ENCODE measurements at regions of chr1 and their contacts with region 1.

Region 1: DNA sequence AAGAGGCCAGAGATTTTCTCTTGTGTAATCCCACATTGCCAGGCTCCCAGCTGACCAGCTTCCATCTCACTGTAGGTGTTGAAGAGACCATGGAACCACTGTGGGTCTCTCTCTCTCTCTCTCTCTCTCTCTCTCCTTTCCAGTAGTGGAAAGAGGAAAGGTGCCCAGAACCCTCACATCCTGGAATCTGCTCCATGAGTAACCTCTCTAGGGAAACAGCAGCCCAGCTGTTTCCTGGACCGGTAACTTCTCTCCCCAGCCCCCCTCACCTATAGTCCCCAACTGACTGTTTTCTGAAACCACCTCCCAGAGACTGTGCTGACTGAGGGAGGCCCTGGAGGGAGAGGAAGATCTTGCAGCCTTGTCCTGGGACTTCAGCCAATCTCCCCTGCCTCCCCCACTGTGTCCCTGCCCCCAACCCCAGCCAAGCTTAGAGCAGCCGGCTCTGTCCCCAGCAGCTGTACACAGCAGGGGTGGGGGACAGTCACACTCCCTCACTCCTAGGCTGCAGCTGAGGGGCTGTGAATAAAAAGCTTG is 20.6 kb upstream of the SLC45A3 start:
- DNase-seq: no peak
- ATAC-seq: no peak
- H3K4me3 ChIP-seq: no peak overlapping the region
- H3K27ac ChIP-seq: no peak overlapping the region
- H3K4me1 ChIP-seq: no peaks in the 10 kb centered on the region
- H3K27me3 ChIP-seq: no peaks in the 10 kb centered on the region
- CTCF ChIP-seq: no peak
- POLR2A ChIP-seq: no peak

Region 2: DNA sequence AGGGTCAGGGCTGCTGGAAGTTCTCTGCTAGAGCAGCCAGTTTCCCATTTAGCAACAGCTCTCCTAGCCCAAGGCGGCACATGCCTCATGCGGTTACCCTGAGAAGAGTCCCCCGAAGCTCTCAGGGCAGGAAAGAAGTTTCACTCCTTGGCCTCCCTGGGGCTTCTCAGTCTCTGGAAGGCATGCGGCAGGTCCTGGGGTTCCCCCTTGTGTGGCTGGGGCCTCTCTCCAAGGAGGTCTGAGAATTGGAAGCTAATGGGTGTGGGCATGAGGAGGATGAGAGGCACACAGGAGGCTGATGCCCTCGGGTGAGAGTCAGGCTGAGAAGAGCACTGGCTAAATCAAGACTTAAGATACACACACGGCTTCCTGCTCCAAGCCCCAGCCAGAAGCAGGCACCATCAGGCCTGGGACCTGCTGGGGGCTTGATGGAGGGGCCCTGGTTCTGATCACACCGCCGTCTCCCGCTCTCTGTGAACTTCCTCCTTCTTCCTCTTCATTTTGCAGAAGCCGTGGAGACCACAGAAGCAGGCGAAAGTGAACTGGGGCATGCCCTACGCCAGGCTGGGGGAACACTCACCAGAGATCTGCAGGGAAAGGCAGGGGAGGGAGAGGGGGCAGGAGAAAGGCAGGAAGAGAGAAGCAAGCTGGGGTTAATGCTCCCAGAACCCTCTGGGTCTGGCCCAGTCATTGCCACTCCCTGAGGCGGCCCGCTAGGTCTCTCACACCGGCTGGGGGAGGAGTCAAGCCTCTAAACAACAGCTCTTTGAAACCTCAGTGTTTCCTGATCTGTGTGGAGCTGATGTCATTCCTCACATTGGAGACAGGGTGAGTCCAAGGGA is 260.2 kb before region 1 on chr1:
- intact Hi-C with region 1: no loop called
- DNase-seq: peak; percentile 65 to 86 (median 80)
- ATAC-seq: peak; percentile 90
- H3K4me3 ChIP-seq: no peak overlapping the region
- H3K27ac ChIP-seq: peak overlapping the region; percentile 61 to 85 (median 82)
- H3K4me1 ChIP-seq: peaks cover 47% of the 10 kb centered on the region
- H3K27me3 ChIP-seq: no peaks in the 10 kb centered on the region
- CTCF ChIP-seq: peak in 2 of 7 experiments; percentile 4 to 12
- POLR2A ChIP-seq: peak in 2 of 3 donors; percentile 39 to 51

Region 3: GRCh38 chr1:205485338-205486228 is 215.3 kb before region 1 on chr1:
- intact Hi-C with region 1: no loop called
- DNase-seq: peak; percentile 76 to 79 (median 76)
- ATAC-seq: peak; percentile 81
- H3K4me3 ChIP-seq: no peak overlapping the region
- H3K27ac ChIP-seq: no peak overlapping the region
- H3K4me1 ChIP-seq: peaks cover 7% of the 10 kb centered on the region
- H3K27me3 ChIP-seq: no peaks in the 10 kb centered on the region
- CTCF ChIP-seq: peak; percentile 89 to 98 (median 92)
- POLR2A ChIP-seq: no peak

Region 4: DNA sequence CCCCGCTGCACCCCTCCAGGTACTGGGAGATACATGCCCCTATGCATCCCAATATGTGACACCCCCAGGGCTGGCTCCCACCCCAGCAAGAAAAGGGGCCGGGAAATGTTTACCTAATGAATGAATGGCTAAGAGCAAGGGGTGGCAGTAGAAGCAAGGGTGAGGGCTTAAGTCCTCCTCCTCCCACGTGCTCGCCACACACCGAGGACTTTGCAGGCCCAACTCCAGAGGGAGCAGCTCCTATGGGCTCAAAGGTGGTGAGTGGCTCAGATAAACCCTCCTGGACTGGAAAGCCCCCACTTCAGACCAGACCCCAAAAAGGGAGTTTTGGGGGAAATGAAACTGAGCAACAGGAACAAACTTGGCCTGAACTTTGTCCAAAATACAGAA is 32.0 kb before region 1 on chr1:
- intact Hi-C with region 1: loop called (anchors 5 kb)
- DNase-seq: no peak
- ATAC-seq: no peak
- H3K4me3 ChIP-seq: no peak overlapping the region
- H3K27ac ChIP-seq: no peak overlapping the region
- H3K4me1 ChIP-seq: peaks cover 18% of the 10 kb centered on the region
- H3K27me3 ChIP-seq: no peaks in the 10 kb centered on the region
- CTCF ChIP-seq: no peak
- POLR2A ChIP-seq: no peak

Region 5: DNA sequence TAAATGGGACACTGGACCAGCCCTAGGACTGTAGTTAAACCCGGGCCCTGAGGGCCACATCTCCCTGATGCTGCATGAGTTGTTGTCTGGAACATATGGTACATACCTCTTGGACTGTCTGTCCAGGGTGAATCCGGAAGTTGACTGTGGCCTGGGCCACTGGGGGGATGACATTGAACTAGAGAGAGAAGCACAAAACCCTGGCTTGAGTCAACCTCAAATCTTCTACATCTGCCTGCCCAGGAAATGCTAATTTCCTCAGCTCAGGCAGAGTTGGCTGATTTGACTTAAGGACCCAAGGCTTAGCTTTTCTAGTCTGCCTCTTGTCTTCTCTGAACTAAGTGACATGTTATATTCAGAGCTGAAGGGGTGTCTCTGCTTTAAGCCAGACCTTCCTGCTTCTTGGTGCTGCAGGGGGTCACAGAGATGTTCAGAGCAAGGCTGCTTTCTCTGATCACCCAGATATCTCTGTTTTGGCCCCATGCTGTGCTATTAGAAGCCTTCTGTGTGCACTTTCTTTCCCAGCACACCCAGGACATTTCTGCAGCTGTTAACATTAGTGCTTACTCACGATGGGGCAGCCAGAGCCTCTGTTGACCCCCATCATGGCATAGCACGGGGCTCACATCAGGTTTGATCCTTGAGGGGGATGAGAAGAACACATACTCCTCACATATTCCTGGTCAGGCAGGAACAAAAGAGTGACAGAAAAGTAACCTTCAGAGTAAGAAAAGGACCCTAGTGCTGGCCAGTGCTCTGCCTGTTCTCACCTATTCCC is 139.4 kb after region 1 on chr1:
- intact Hi-C with region 1: no loop called
- DNase-seq: no peak
- ATAC-seq: no peak
- H3K4me3 ChIP-seq: no peak overlapping the region
- H3K27ac ChIP-seq: peak overlapping the region in 1 of 4 donors; percentile 4
- H3K4me1 ChIP-seq: peaks cover 46% of the 10 kb centered on the region
- H3K27me3 ChIP-seq: no peaks in the 10 kb centered on the region
- CTCF ChIP-seq: no peak
- POLR2A ChIP-seq: no peak

Measured in body of pancreas (tissue), 4 donors.